Naive thymus-derived CD4-positive, alpha-beta T cell (primary cell): ENCODE measurements at regions of chr4 and their contacts with region 1.

Region 1: DNA sequence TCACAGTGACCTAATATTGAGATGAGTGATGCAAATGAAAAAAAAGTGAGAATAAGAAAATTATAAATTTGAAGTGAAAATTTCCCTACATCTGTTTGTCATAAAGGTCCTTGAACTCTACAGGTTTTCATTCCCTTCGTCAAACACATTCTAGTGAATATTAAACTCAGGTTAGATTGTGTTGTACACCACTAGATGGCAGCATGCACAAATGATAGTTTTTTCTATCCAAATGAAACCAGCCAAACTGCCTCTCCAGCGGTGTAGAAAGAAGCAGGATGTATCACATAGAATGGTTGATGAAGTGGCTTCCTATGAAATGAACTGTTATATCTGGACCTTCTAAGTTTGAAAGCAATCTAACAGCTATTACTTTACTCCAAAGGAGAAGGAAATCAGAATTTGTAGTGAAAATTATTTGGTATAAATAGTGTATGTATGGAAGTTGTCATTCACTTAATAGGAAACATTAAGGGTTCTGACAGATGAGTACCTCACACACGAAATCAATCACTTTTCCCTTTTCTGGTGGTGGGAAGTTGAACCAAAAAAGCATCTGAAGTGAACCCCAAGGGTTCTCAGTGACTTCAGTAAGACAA is 382.7 kb downstream of the UNC5C start:
- DNase-seq: peak in 7 of 9 donors; percentile 36 to 76 (median 64)
- ATAC-seq: peak; percentile 81
- H3K4me3 ChIP-seq: no peak overlapping the region
- H3K4me3 Mint-ChIP-seq: no peak overlapping the region
- H3K27ac ChIP-seq: no peak overlapping the region
- H3K27ac Mint-ChIP-seq: no peak overlapping the region
- H3K4me1 ChIP-seq: no peaks in the 10 kb centered on the region
- H3K4me1 Mint-ChIP-seq: peaks cover 0 to 6% (median 0%) of the 10 kb centered on the region in 7 donors
- H3K27me3 ChIP-seq: no peaks in the 10 kb centered on the region
- H3K27me3 Mint-ChIP-seq: peaks cover 0 to 11% (median 0%) of the 10 kb centered on the region in 5 donors

Region 2: DNA sequence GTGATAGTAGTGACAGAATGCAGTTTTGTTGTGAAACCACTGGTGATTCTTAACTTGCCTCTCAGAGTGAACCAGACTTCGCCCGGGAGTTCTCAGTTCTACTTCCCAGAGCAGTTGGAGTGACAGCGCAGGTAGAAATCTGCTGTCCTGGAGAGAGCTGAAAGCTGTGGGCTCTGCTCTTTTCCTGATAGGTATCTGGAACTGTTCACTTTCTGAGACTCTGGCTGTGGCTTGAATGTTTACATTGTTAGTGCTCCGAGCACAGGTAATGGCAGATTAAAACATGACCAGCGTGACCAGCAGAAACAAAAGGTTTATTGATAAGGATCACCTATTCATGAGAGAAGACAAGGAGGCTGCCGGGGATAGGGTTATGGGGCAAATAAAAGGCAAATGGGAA is 47.5 kb before region 1 on chr4:
- CTCF ChIA-PET with region 1: no interaction called
- POLR2A ChIA-PET with region 1: no interaction called
- intact Hi-C with region 1: no loop called
- DNase-seq: no peak
- ATAC-seq: no peak
- H3K4me3 ChIP-seq: no peak overlapping the region
- H3K4me3 Mint-ChIP-seq: no peak overlapping the region
- H3K27ac ChIP-seq: no peak overlapping the region
- H3K27ac Mint-ChIP-seq: no peak overlapping the region
- H3K4me1 ChIP-seq: no peaks in the 10 kb centered on the region
- H3K4me1 Mint-ChIP-seq: no peaks in the 10 kb centered on the region
- H3K27me3 ChIP-seq: no peaks in the 10 kb centered on the region
- H3K27me3 Mint-ChIP-seq: peaks cover 0 to 7% (median 0%) of the 10 kb centered on the region in 5 donors

Region 3: DNA sequence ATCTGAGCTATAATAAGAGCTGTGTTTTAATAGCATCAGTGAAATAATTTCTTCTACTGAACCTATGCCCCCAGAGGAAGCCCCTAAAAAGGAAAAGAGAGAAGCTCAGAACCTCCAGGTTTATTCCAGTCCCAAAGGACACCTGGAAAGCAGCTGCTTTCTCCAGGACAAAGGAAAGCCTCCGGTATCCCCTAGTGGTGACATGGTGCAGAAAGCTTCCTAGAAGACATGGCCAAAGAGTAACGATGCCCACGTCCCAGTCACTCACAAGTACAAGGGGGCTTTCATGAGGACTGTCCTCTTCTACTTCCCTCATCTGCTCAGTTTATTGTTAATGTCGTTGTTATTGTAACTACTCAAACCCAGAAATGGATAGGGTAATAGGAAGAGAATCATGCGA is 38.8 kb after region 1 on chr4:
- CTCF ChIA-PET with region 1: interaction called, 11 read pairs
- POLR2A ChIA-PET with region 1: no interaction called
- intact Hi-C with region 1: loop called in 1 of 2 experiments (anchors 1 kb)
- DNase-seq: no peak
- ATAC-seq: no peak
- H3K4me3 ChIP-seq: no peak overlapping the region
- H3K4me3 Mint-ChIP-seq: no peak overlapping the region
- H3K27ac ChIP-seq: no peak overlapping the region
- H3K27ac Mint-ChIP-seq: no peak overlapping the region
- H3K4me1 ChIP-seq: no peaks in the 10 kb centered on the region
- H3K4me1 Mint-ChIP-seq: peaks cover 0 to 1% (median 0%) of the 10 kb centered on the region in 7 donors
- H3K27me3 ChIP-seq: no peaks in the 10 kb centered on the region
- H3K27me3 Mint-ChIP-seq: peaks cover 0 to 2% (median 0%) of the 10 kb centered on the region in 5 donors

Region 4: DNA sequence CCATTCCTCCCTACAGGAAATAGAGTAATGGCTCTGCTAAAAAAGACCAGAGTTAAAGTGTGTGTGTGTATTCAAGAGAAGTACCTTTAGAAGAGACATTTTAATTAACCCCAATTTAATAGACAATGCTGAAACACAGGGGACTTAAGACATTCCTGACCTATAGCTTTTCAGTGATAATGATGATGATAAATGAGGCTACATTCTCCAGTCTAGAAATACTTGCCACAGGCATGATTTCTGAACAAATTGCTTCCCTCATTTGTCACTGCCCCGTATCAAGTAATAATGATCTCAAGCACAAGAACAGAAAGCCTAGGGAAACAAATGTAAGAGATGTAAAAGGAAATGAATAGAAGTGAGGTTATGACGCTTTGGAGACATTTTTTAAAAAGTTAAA is 265.7 kb after region 1 on chr4:
- CTCF ChIA-PET with region 1: no interaction called
- POLR2A ChIA-PET with region 1: no interaction called
- intact Hi-C with region 1: loop called in 1 of 2 experiments (anchors 5 kb)
- DNase-seq: no peak
- ATAC-seq: no peak
- H3K4me3 ChIP-seq: no peak overlapping the region
- H3K4me3 Mint-ChIP-seq: no peak overlapping the region
- H3K27ac ChIP-seq: no peak overlapping the region
- H3K27ac Mint-ChIP-seq: no peak overlapping the region
- H3K4me1 ChIP-seq: no peaks in the 10 kb centered on the region
- H3K4me1 Mint-ChIP-seq: peaks cover 0 to 8% (median 3%) of the 10 kb centered on the region in 7 donors
- H3K27me3 ChIP-seq: no peaks in the 10 kb centered on the region
- H3K27me3 Mint-ChIP-seq: peaks cover 0 to 7% (median 0%) of the 10 kb centered on the region in 5 donors

Region 5: GRCh38 chr4:95549246-95550114 is 383.5 kb after region 1 on chr4:
- CTCF ChIA-PET with region 1: no interaction called
- POLR2A ChIA-PET with region 1: no interaction called
- intact Hi-C with region 1: loop called in 1 of 2 experiments (anchors 10 kb)
- DNase-seq: peak in 1 of 9 donors; percentile 28
- ATAC-seq: peak; percentile 35
- H3K4me3 ChIP-seq: no peak overlapping the region
- H3K4me3 Mint-ChIP-seq: peak overlapping the region; percentile 58 to 91 (median 72)
- H3K27ac ChIP-seq: no peak overlapping the region
- H3K27ac Mint-ChIP-seq: no peak overlapping the region
- H3K4me1 ChIP-seq: no peaks in the 10 kb centered on the region
- H3K4me1 Mint-ChIP-seq: peaks cover 0 to 22% (median 16%) of the 10 kb centered on the region in 7 donors
- H3K27me3 ChIP-seq: no peaks in the 10 kb centered on the region
- H3K27me3 Mint-ChIP-seq: peaks cover 40 to 67% (median 55%) of the 10 kb centered on the region in 5 donors

Region 6: DNA sequence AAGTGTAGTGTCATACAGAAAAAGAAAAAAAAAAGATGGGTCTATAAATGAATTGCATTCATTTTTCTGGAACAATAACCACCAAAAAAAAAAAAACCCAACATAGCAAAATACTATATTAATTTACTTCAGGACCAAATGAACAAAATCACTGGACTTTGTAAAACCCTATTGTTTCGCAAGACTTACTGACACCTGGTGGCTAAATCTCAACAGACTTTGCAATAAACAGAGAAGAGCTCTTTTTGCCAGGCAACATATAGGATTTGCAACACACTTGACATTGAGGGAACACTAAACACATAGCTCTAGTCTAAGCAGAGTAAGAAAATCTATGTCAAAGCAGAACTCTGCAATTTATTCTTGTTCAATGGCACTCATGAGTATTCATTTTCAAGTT is 1987.0 kb after region 1 on chr4:
- CTCF ChIA-PET with region 1: no interaction called
- POLR2A ChIA-PET with region 1: no interaction called
- intact Hi-C with region 1: loop called in 1 of 2 experiments (anchors 5 kb)
- DNase-seq: no peak
- ATAC-seq: no peak
- H3K4me3 ChIP-seq: no peak overlapping the region
- H3K4me3 Mint-ChIP-seq: no peak overlapping the region
- H3K27ac ChIP-seq: no peak overlapping the region
- H3K27ac Mint-ChIP-seq: no peak overlapping the region
- H3K4me1 ChIP-seq: no peaks in the 10 kb centered on the region
- H3K4me1 Mint-ChIP-seq: no peaks in the 10 kb centered on the region
- H3K27me3 ChIP-seq: no peaks in the 10 kb centered on the region
- H3K27me3 Mint-ChIP-seq: no peaks in the 10 kb centered on the region